ENCODE measurements at regions of chr20 and their contacts with region 1.

Region 1: DNA sequence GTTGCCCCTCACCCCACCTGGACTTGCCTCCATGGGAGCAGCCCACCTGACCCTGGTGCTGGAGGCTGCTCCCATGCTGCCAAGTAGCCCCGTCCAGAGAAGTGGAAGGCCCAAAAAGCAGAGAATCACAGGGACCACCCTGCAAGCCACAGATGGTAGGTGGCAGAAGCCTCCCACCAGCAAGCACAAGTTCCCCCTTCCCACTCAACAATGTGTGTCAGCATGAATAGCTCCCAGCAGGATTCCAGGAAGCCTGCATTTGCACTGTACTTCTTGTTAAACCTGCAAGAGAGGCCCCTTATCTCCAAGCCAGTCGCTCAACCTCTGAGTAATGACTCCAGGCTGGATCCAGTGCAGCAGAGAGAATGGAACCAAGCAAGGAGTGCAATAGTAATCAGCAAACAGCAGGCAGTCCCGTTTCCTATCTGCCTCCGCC is 180.8 kb upstream of the CST7 start:
- DNase-seq: peak in 1 of 2 donors; percentile 15
- H3K4me3 ChIP-seq: no peak overlapping the region
- H3K27ac ChIP-seq: no peak overlapping the region
- H3K4me1 ChIP-seq: no peaks in the 10 kb centered on the region
- H3K27me3 ChIP-seq: peaks cover 0 to 21% of the 10 kb centered on the region in 2 donors
- CTCF ChIP-seq: no peak
- POLR2A ChIP-seq: no peak

Region 2: DNA sequence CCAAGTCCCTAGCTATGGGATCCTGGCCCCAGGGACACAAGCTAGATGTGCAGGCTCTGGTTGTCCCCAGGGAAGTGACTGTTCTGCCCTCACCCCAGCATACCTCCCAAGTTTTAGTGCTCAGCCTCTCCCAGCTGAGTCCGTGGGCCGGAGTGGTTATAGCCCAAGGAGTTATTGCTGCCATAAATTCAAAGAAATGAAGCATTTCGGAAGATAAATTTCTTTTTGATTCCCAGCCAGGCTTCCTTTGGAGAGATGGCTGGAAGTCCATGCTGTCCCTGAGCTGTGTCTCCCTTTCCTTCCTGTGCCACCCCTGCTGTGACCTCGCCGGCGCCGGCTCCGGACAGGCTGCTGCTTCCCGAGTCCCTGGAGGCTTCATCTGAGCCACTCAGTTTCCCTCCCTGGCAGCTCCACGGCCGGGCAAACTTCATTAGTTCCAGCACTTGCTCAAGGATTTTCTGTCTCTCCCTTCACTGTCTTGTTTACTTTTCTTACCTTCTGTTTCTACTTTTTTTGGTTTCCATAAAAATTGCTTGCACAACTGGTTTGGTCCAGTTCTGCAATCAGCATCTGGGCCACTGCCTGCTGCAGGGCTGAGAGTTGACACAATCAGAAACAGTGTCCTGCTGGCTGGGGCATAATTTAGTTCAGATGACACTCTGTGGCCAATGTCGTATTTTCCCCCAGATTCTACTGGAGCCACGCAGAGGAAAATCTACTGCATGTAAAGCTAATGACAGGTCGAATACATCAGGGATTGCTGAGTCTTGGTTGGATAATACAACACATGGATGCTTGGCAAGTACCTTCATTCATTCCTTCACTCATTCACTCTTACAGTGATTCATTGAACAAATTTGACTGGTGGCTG is 73.3 kb before region 1 on chr20:
- intact Hi-C with region 1: loop called (anchors 10 kb)
- DNase-seq: peak; percentile 16 to 43
- H3K4me3 ChIP-seq: no peak overlapping the region
- H3K27ac ChIP-seq: no peak overlapping the region
- H3K4me1 ChIP-seq: no peaks in the 10 kb centered on the region
- H3K27me3 ChIP-seq: peaks cover 0 to 6% of the 10 kb centered on the region in 2 donors
- CTCF ChIP-seq: no peak
- POLR2A ChIP-seq: no peak

Region 3: GRCh38 chr20:25042531-25043498 is 274.6 kb after region 1 on chr20:
- intact Hi-C with region 1: no loop called
- DNase-seq: no peak
- H3K4me3 ChIP-seq: no peak overlapping the region
- H3K27ac ChIP-seq: peak overlapping the region; percentile 33 to 66
- H3K4me1 ChIP-seq: peaks cover 21 to 28% of the 10 kb centered on the region in 2 donors
- H3K27me3 ChIP-seq: no peaks in the 10 kb centered on the region
- CTCF ChIP-seq: no peak
- POLR2A ChIP-seq: no peak

Measured in breast epithelium (tissue), 4 donors.